ENCODE measurements at regions of chr13 and their contacts with region 1.

Region 1: GRCh38 chr13:84917252-84917878 is 881.9 kb downstream of the SLITRK6 start:
- DNase-seq: peak; percentile 9

Region 2: GRCh38 chr13:84481958-84482357 is 435.4 kb before region 1 on chr13:
- in situ Hi-C with region 1: no loop called
- DNase-seq: peak; percentile 14

Region 3: DNA sequence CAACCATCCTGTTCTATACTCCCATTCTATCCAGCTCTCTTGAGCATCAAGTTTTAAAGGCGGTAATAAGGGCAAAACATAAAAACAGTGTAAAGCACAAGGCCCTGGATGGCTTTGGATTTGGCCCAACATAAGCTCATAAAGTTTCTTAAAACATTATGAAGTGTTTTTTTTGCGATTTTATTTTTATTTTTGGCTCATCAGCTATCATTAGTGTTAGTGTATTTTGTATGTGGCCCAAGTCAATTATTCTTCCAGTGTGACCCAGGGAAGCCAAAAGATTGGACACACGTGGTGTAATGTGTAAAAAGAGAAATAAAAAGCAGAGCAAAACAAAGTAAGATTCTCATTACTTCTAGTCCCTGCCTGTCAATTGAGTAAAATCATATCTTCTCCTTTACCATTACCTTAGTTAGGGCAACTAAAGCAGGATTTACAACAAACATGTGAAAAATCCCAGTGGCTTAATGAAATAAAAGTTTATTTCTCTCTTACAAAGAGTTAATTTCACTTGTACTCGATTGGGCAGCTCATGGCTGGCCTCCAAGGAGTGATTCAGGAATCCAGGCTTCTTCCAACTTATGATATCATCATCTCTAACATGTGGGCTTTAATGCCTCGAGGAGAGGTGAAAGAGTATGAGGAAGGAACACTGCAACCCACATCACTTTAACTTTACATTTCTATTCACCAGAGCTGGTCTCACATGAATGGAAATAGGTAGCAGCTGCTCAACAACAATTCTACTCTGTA is 309.9 kb before region 1 on chr13:
- in situ Hi-C with region 1: no loop called
- DNase-seq: no peak

Region 4: GRCh38 chr13:85806553-85807175 is 889.3 kb after region 1 on chr13:
- in situ Hi-C with region 1: loop called (anchors 25 kb)
- DNase-seq: peak; percentile 39